PC-9 (cell line): ENCODE measurements at regions of chr16 and their contacts with region 1.

Region 1: GRCh38 chr16:8986111-8986510 is 22.4 kb upstream of the USP7 start:
- DNase-seq: no peak
- H3K4me3 ChIP-seq: no peak overlapping the region
- H3K27ac ChIP-seq: no peak overlapping the region
- H3K4me1 ChIP-seq: 0 out of 2 replicates have a peak, but pooled peaks cover 3% of the 10 kb centered on the region
- H3K27me3 ChIP-seq: no peaks in the 10 kb centered on the region
- CTCF ChIP-seq: no peak

Region 2: GRCh38 chr16:7257016-7257415 is 1729.1 kb before region 1 on chr16:
- CTCF ChIA-PET with region 1: no interaction called
- POLR2A ChIA-PET with region 1: no interaction called
- intact Hi-C with region 1: no loop called
- DNase-seq: no peak
- H3K4me3 ChIP-seq: no peak overlapping the region
- H3K27ac ChIP-seq: no peak overlapping the region
- H3K4me1 ChIP-seq: no peaks in the 10 kb centered on the region
- H3K27me3 ChIP-seq: peaks cover 10% of the 10 kb centered on the region; the same call in 1 of the 2 replicates
- CTCF ChIP-seq: no peak

Region 3: GRCh38 chr16:8998114-8998513 is 12.0 kb after region 1 on chr16:
- CTCF ChIA-PET with region 1: no interaction called
- POLR2A ChIA-PET with region 1: interaction called, 16 read pairs
- intact Hi-C with region 1: no loop called
- DNase-seq: peak in 1 of 2 experiments; percentile 48
- H3K4me3 ChIP-seq: no peak overlapping the region
- H3K27ac ChIP-seq: no peak overlapping the region
- H3K4me1 ChIP-seq: peaks cover 3% of the 10 kb centered on the region; the same call in 1 of the 2 replicates
- H3K27me3 ChIP-seq: no peaks in the 10 kb centered on the region
- CTCF ChIP-seq: no peak